Activated CD4-positive, alpha-beta T cell treated with anti-CD3 and anti-CD28 coated beads for 36 hours (primary cell): ENCODE measurements at regions of chr10 and their contacts with region 1.

Region 1: GRCh38 chr10:17742918-17743317 is 9.1 kb upstream of the TMEM236 start:
- DNase-seq: peak; percentile 83
- ATAC-seq: peak; percentile 30
- H3K4me3 Mint-ChIP-seq: no peak overlapping the region
- H3K27ac Mint-ChIP-seq: no peak overlapping the region
- H3K4me1 Mint-ChIP-seq: peaks cover 5% of the 10 kb centered on the region
- H3K27me3 Mint-ChIP-seq: no peaks in the 10 kb centered on the region

Region 2: DNA sequence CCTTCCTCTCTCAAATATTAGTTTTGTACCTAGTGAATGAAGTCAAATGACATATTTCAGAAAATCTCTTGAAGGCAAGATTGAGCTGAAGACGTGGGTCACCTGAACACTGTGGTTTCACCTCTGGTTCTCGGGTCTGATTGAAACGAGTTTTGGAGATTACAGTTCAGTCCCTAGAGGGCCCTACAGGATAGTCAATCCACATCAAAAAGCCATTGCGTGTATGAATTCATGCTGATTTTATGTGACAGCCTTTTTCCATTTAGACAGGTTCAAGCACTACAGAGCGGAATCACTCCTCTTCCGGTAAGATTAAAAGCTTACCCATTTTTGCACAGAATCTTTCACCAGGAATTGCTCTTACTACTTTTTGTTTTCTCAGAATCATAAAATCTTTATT is 452.7 kb before region 1 on chr10:
- CTCF ChIA-PET with region 1: interaction called, 3 read pairs
- POLR2A ChIA-PET with region 1: no interaction called
- intact Hi-C with region 1: loop called in 1 of 2 experiments (anchors 10 kb)
- DNase-seq: peak; percentile 25
- ATAC-seq: peak; percentile 96
- H3K4me3 Mint-ChIP-seq: no peak overlapping the region
- H3K27ac Mint-ChIP-seq: no peak overlapping the region
- H3K4me1 Mint-ChIP-seq: peaks cover 12% of the 10 kb centered on the region
- H3K27me3 Mint-ChIP-seq: peaks cover 23% of the 10 kb centered on the region